Activated CD4-positive, alpha-beta T cell treated with anti-CD3 and anti-CD28 coated beads, Interleukin-2, amount 10 ng/mL, durations not matched to agents 24 days and 14 days (primary cell): ENCODE measurements at regions of chr1 and their contacts with region 1.

Region 1: DNA sequence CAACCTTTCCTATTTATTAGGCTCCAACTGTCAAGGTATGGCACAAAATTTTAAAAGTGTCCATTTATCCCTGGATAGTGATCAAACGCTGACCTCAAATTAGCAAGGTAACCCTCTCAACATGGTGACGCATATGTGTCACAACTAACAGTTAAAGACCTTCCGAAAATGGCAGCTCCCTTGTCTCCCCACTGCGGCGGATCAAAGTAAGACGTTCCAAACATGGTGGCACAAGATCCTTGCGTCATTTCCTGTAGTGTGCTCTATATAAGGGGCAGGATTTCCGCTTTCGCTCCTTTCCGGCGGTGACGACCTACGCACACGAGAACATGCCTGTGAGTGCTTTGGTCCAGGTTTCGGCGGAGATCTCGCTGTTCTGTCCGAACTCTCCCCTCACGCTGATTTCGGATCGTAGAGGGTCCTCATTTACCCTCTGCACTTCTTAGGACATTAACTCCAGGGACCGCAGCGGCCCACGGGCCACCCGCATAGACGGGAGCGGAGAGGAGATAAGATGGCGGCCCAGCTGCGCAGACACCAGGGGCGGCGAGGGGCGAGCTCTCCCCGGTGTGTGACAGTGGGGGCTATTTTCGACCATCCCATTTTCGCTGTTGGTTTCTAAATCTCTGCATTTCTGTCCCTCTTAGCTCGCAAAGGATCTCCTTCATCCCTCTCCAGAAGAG is at the start of gene RPS27:
- DNase-seq: peak; percentile 96
- H3K4me3 Mint-ChIP-seq: peak within 1 kb of the TSS; percentile 93
- H3K27ac Mint-ChIP-seq: peak within 1 kb of the TSS; percentile 96
- H3K4me1 Mint-ChIP-seq: peaks cover 38% of the 10 kb centered on the region
- H3K27me3 Mint-ChIP-seq: no peaks in the 10 kb centered on the region
- total RNA-seq, gene RPS27: 1,207 and 1,242 TPM in 2 replicates

Region 2: GRCh38 chr1:153727463-153728304 is 262.9 kb before region 1 on chr1 and contains the start of gene INTS3:
- intact Hi-C with region 1: loop called (anchors 5 kb)
- DNase-seq: peak; percentile 100
- H3K4me3 Mint-ChIP-seq: peak within 1 kb of the TSS; percentile 96
- H3K27ac Mint-ChIP-seq: peak within 1 kb of the TSS; percentile 97
- H3K4me1 Mint-ChIP-seq: peaks cover 32% of the 10 kb centered on the region
- H3K27me3 Mint-ChIP-seq: no peaks in the 10 kb centered on the region
- total RNA-seq, gene INTS3: 63.1 and 64.8 TPM in 2 replicates

Region 3: DNA sequence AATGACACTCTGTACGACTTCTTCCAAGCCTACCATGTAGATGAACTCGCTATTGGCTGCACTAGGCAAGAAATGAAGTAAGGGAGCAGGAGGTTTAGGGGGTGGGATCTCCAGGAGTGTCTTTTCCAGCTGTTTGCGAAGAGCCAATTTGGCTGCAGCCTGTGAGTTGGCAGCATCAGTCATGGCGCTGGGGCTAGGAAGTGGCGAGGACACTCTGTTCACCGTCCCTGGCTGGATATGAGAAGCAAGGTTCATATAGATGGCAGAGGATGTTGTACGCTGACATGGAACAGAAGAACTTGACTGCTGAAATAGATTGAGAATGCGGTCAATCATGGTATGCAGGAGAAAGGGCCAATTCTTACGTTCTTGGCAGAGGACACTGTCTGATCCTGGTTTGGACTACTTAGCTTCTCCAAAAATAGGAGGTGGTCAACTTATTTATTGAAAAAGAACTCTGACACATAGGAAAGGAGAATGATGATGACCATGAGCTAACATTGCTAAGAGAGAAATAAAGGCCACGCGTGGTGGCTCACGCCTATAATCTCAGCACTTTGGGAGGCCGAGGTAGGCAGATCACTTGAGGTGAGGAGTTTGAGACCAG is 174.2 kb before region 1 on chr1:
- intact Hi-C with region 1: loop called (anchors 1 kb)
- DNase-seq: no peak
- H3K4me3 Mint-ChIP-seq: no peak overlapping the region
- H3K27ac Mint-ChIP-seq: no peak overlapping the region
- H3K4me1 Mint-ChIP-seq: peaks cover 2% of the 10 kb centered on the region
- H3K27me3 Mint-ChIP-seq: no peaks in the 10 kb centered on the region

Region 4: GRCh38 chr1:153967082-153968000 is 23.3 kb before region 1 on chr1 and contains the start of gene CREB3L4:
- intact Hi-C with region 1: loop called (anchors 1 kb)
- DNase-seq: peak; percentile 95
- H3K4me3 Mint-ChIP-seq: peak within 1 kb of the TSS; percentile 92
- H3K27ac Mint-ChIP-seq: peak within 1 kb of the TSS; percentile 98
- H3K4me1 Mint-ChIP-seq: peaks cover 48% of the 10 kb centered on the region
- H3K27me3 Mint-ChIP-seq: no peaks in the 10 kb centered on the region
- total RNA-seq, gene CREB3L4: 8.3 and 9.7 TPM in 2 replicates

Region 5: DNA sequence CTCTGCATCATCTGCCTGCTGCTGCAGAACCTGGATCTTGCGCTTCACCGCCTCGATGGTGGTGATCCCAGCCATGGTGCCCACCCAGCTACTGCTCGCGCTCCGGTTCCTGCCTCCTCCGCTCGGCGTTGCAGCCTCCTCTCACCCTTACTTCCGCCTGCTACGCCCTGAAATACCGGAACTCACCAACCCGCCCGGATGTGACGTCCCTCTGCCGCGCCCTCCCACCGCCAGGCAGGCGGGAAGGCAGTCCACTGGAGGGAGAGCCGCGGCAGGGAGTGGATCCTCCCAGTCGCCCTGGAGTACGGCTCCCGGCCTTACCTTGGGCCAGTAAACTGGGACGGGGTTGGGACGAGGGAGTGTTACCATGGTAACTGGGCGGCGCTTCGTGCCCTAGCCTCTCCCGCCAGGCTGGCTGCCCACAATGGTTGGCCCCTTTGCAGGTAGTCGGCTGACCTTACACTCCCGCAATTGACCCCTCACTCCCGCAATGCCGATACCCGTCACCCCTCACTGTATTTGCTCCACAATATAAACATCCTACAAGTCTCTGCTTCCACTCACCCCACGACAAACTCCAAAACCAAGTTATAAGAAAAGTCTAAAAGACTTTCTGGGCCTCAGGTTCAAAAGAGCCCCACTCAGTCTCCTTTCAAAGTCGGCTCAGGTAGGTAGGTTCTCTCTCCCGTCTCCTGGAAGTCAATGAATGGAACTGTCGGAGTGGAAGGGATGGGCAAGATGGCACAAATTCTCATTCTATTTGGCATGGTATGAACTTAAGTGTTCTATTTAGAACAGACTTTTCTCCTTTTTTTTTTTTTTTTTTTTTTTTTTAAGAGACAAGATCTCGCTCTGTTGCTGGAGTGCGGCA is 192.7 kb after region 1 on chr1:
- intact Hi-C with region 1: loop called (anchors 5 kb)
- DNase-seq: peak; percentile 99
- H3K4me3 Mint-ChIP-seq: peak overlapping the region; percentile 99
- H3K27ac Mint-ChIP-seq: peak overlapping the region; percentile 100
- H3K4me1 Mint-ChIP-seq: peaks cover 49% of the 10 kb centered on the region
- H3K27me3 Mint-ChIP-seq: peaks cover 4% of the 10 kb centered on the region